ENCODE measurements at regions of chr16 and their contacts with region 1.

Region 1: DNA sequence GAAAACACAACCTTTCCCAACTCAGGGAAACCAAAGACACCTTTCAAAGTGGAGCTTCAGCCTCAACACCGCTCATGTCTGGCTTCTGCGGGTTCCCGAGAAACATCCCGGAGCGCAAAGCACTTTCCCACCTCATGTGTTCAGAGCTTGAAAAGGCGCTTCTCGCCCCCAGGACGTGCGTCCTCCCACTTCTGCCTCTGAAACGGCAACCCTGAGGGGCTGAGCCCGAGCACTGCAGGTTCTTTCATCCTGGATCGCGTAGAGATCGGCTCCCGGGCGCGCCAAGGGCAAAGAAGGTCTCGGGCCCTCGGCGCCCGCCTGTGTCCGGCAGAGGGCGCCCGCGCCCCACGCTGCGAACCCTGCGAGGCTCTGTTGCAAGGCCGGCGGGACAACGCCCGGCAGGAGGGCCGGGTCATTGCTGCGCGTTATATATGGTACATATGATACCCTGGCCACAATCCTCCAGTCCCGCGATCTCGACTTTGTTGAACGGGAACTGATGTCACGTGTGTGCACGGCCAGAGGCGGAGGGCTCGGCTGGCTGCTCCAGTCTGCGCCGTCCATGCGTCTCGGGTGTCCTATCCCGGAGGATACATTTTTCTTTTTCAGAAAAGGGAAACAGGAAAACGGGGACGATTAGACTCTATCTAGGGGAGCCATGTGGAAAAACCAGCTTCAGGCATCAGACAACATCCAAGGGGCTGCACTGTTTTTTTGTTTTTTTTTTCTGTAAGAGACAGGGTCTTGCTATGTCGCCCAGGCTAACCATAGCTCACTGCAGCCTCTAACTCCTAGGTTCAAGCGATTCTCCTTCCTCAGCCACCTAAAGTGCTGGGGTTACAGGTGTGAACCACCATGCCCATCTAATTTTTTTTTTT is 19.1 kb downstream of the COQ7 start:
- DNase-seq: peak; percentile 81
- H3K27ac ChIP-seq: peak overlapping the region; percentile 49
- CTCF ChIP-seq: peak; percentile 98

Region 2: DNA sequence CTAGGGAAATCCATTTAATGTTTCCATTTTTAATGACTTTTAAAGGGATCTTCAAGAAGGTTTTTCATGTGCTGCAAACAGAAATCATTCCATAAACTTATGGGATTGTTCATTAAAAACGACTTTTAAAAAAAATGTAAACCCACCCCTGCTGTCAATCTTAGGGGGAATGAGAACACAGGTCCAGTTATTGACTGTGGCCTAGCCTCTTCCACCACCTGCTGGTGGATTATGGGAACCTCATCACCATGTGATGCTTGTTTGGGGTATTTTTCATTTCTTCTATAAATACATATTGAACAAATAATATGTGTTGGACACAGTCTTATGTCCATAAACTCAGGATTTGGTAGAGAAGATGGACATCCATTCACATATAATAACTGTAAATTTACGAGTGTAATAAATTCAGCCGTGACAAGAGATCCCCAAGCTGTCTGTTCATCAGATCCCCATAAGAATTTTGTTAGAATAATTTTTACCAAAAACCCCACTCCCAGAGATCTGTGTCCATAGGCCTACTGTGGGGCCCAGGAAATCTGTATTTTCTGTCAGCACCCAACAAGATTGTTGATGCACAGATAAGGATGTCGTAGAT is 289.1 kb after region 1 on chr16:
- CTCF ChIA-PET with region 1: interaction called, 10 read pairs
- POLR2A ChIA-PET with region 1: no interaction called
- DNase-seq: peak; percentile 78
- H3K27ac ChIP-seq: no peak overlapping the region
- CTCF ChIP-seq: peak; percentile 89

Measured in RWPE1 (cell line).